ENCODE measurements at regions of chr1 and their contacts with region 1.

Region 1: DNA sequence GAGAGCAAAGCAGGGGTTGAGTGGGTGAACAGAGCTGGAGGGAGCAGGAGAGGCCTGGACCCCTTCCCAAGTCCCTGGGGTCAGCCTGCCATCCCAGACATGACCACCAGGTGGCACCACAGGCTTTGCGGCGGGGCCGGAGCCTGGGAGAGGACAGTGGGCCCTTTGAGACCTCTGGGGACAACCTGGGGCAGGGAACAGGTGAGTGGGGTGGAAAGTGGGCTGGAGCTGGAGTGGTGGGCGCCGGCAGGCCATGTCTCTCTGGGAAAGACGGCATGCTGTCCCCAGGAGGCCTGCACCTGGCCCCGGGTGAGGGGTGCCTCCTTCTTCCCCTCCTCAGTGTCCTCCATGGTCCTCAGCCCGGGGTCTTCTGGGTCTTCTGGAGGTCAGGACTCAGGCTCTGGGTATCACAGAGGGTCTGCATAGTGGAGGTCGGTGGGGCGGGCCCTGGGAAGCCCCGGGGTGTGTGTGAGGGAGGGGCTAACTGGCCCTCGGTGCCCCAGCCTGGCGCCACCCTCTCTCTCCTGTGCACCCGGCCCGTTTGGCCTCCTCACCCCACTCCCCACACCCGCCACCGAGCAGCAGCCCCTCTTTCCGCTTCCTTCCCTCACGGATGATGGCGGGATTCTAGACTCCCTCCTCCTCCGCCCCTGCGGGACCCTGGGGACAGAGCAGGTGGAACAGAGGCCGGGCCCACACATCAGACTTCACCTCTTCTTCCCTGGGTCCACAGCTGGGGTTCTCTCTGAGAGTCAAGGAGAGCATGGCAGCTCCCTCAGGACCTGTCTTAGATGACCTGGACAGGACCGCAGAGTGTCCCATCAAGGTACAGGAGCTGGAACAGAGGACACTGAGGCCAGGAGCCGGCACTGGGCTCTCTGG is 28.4 kb upstream of the PKP1 start:
- DNase-seq: peak; percentile 80
- H3K4me3 Mint-ChIP-seq: no peak overlapping the region
- H3K27ac Mint-ChIP-seq: no peak overlapping the region
- H3K4me1 Mint-ChIP-seq: no peaks in the 10 kb centered on the region
- H3K27me3 Mint-ChIP-seq: no peaks in the 10 kb centered on the region
- CTCF ChIP-seq: peak; percentile 100

Region 2: GRCh38 chr1:201288766-201289165 is 33.9 kb after region 1 on chr1:
- CTCF ChIA-PET with region 1: interaction called, 415 read pairs
- POLR2A ChIA-PET with region 1: interaction called, 3,819 read pairs
- intact Hi-C with region 1: no loop called
- DNase-seq: peak; percentile 64
- H3K4me3 Mint-ChIP-seq: peak overlapping the region; percentile 15
- H3K27ac Mint-ChIP-seq: peak overlapping the region; percentile 83
- H3K4me1 Mint-ChIP-seq: peaks cover 28% of the 10 kb centered on the region
- H3K27me3 Mint-ChIP-seq: no peaks in the 10 kb centered on the region
- CTCF ChIP-seq: peak; percentile 7

Region 3: GRCh38 chr1:201329286-201329685 is 74.4 kb after region 1 on chr1:
- CTCF ChIA-PET with region 1: interaction called, 16 read pairs
- POLR2A ChIA-PET with region 1: interaction called, 3 read pairs
- intact Hi-C with region 1: no loop called
- DNase-seq: peak; percentile 76
- H3K4me3 Mint-ChIP-seq: no peak overlapping the region
- H3K27ac Mint-ChIP-seq: no peak overlapping the region
- H3K4me1 Mint-ChIP-seq: peaks cover 11% of the 10 kb centered on the region
- H3K27me3 Mint-ChIP-seq: no peaks in the 10 kb centered on the region
- CTCF ChIP-seq: no peak

Region 4: GRCh38 chr1:201369209-201369608 is 114.3 kb after region 1 on chr1:
- CTCF ChIA-PET with region 1: interaction called, 550 read pairs
- POLR2A ChIA-PET with region 1: interaction called, 4 read pairs
- intact Hi-C with region 1: no loop called
- DNase-seq: no peak
- H3K4me3 Mint-ChIP-seq: no peak overlapping the region
- H3K27ac Mint-ChIP-seq: no peak overlapping the region
- H3K4me1 Mint-ChIP-seq: no peaks in the 10 kb centered on the region
- H3K27me3 Mint-ChIP-seq: peaks cover 76% of the 10 kb centered on the region
- CTCF ChIP-seq: no peak

Region 5: GRCh38 chr1:201399352-201400126 is 144.7 kb after region 1 on chr1:
- CTCF ChIA-PET with region 1: interaction called, 78 read pairs
- POLR2A ChIA-PET with region 1: interaction called, 15 read pairs
- intact Hi-C with region 1: no loop called
- DNase-seq: peak; percentile 75
- H3K4me3 Mint-ChIP-seq: peak overlapping the region; percentile 66
- H3K27ac Mint-ChIP-seq: no peak overlapping the region
- H3K4me1 Mint-ChIP-seq: peaks cover 24% of the 10 kb centered on the region
- H3K27me3 Mint-ChIP-seq: no peaks in the 10 kb centered on the region
- CTCF ChIP-seq: no peak

Region 6: GRCh38 chr1:201511941-201512539 is 257.2 kb after region 1 on chr1:
- CTCF ChIA-PET with region 1: interaction called, 10 read pairs
- POLR2A ChIA-PET with region 1: no interaction called
- intact Hi-C with region 1: no loop called
- DNase-seq: no peak
- H3K4me3 Mint-ChIP-seq: no peak overlapping the region
- H3K27ac Mint-ChIP-seq: peak overlapping the region; percentile 31
- H3K4me1 Mint-ChIP-seq: peaks cover 7% of the 10 kb centered on the region
- H3K27me3 Mint-ChIP-seq: no peaks in the 10 kb centered on the region
- CTCF ChIP-seq: no peak

Region 7: GRCh38 chr1:201562659-201563405 is 308.0 kb after region 1 on chr1:
- CTCF ChIA-PET with region 1: no interaction called
- POLR2A ChIA-PET with region 1: no interaction called
- intact Hi-C with region 1: no loop called
- DNase-seq: peak; percentile 69
- H3K4me3 Mint-ChIP-seq: no peak overlapping the region
- H3K27ac Mint-ChIP-seq: peak overlapping the region; percentile 65
- H3K4me1 Mint-ChIP-seq: peaks cover 51% of the 10 kb centered on the region
- H3K27me3 Mint-ChIP-seq: no peaks in the 10 kb centered on the region
- CTCF ChIP-seq: no peak

Measured in MCF 10A (cell line).